ENCODE measurements at regions of chr1 and their contacts with region 1.

Region 1: DNA sequence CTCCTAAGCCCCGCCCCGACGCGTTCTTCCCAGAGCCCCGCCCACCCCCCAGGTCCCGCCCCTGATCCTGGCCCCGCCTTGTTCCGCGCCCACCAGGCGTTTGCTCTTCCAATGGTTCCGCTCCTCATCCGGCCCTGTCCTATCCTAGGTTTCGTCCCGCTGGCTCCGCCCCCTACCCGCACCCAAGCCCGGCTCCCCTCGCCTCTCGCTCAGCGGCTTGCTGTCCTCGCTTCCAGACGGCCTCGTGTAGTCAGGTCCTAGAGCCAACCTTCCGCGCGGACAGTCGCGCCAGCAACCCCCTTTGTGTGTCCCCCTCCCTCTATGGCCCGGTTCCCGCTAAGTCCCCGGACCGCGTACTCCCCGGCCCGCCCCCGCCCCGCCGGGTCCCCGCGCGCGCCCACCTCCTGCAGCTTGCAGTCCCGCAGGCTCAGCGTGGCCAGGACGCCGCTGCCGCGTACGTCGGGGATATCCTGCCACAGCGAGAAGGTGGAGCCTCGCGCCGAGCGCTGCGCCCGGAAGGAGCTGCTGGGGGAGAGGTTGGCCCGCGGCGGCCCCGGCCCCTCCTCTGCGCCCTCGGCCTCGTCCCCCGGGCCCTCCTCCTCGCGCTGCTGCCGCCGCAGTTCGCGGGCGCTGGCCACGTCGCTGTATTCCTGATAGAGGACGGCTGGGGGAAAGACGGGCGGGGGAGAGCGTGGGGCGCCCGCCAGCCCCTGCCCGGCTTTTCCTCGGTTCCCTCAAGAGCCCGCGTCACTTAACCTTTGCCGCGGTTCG is 5.7 kb downstream of the ARHGEF19 start:
- DNase-seq: peak; percentile 93
- H3K4me3 Mint-ChIP-seq: peak overlapping the region; percentile 83
- H3K27ac Mint-ChIP-seq: peak overlapping the region; percentile 93
- H3K4me1 Mint-ChIP-seq: peaks cover 3% of the 10 kb centered on the region
- H3K27me3 Mint-ChIP-seq: no peaks in the 10 kb centered on the region

Region 2: GRCh38 chr1:15957228-15958095 is 249.3 kb before region 1 on chr1:
- intact Hi-C with region 1: no loop called
- DNase-seq: no peak
- H3K4me3 Mint-ChIP-seq: no peak overlapping the region
- H3K27ac Mint-ChIP-seq: peak overlapping the region; percentile 64
- H3K4me1 Mint-ChIP-seq: peaks cover 62% of the 10 kb centered on the region
- H3K27me3 Mint-ChIP-seq: no peaks in the 10 kb centered on the region

Region 3: DNA sequence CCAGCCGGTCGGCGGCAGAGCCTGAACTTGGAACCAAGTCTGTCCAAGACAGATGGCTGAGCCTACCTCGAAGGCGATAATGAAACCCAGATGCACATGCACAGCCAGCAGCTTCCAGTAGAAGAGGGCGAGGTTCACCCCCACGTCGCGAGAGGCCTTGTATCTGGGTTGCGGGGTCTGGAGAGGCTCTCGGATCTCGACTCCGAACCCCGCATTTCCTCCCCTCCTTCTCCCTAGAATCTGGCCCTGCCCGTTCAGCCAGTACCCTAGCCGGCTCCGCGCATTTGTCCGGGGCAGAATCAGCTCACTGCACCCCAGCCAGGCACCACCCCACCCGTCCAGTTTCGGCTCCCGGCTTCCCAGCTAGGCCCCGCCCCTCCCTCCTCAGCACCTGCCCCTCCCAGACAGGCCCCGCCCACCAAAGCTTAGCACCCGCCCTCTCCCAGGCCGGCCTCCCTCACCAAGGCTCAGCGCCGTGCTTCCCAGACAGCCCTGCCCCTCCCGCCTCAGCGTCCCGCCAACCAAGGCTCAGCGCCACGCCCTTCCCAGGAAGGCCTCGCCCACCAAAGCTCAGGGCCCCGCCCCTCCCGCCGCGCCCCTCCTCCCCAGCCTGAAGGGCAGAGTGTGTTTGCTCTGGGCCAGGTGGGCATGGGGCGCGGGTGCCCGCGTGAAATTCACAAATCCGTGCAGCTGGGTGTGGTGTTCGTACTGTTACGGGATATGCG is 10.5 kb after region 1 on chr1:
- intact Hi-C with region 1: loop called (anchors 1 kb)
- DNase-seq: peak; percentile 92
- H3K4me3 Mint-ChIP-seq: peak overlapping the region; percentile 80
- H3K27ac Mint-ChIP-seq: no peak overlapping the region
- H3K4me1 Mint-ChIP-seq: peaks cover 14% of the 10 kb centered on the region
- H3K27me3 Mint-ChIP-seq: peaks cover 8% of the 10 kb centered on the region

Region 4: DNA sequence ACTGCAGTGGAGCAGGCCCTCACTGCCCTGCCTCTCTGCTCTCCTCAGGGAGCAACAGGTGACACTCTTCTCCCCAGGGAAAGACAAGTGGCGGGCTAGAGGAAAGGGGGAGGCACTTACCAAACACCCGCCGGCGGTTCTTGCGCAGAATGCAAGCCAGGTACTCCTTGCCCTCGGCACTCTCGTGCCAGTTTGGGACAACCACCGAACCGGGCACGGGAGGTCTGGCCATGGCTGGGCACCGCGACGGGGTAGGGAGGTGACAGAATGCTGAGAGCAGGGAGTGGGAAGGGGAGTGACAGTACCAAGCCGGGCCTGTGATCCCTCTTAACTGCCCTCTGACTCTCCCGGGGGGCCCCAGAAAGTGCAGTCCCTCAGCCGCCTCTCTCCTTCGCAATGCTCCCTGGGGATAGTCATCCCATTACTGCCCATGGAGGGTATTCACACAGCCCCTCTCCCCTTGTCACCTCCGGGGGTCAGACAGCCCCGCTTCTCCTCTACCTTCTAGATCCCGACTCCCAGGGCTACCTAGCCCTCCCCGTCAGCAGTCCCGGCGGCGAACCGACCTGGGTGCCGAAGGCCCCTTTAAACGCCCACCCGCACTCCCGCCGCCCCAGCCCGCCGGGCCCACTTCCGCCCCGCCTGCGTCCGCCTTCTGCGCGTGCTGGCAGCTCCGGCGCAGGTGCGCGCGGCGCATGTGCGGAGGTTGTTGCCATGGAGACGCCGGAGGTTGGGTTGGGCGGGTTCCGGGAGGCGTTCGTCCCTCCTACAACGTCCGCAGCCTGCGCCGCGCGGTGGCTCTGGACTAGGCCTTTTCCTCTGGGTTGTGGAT is 30.0 kb after region 1 on chr1 and contains the start of gene CPLANE2:
- intact Hi-C with region 1: loop called (anchors 1 kb)
- DNase-seq: peak; percentile 95
- H3K4me3 Mint-ChIP-seq: peak within 1 kb of the TSS; percentile 86
- H3K27ac Mint-ChIP-seq: peak within 1 kb of the TSS; percentile 80
- H3K4me1 Mint-ChIP-seq: peaks cover 18% of the 10 kb centered on the region
- H3K27me3 Mint-ChIP-seq: no peaks in the 10 kb centered on the region
- total RNA-seq, gene CPLANE2: 3.2 and 3.9 TPM in 2 replicates

Region 5: GRCh38 chr1:16246961-16247360 is 40.2 kb after region 1 on chr1:
- intact Hi-C with region 1: no loop called
- DNase-seq: no peak
- H3K4me3 Mint-ChIP-seq: no peak overlapping the region
- H3K27ac Mint-ChIP-seq: no peak overlapping the region
- H3K4me1 Mint-ChIP-seq: peaks cover 9% of the 10 kb centered on the region
- H3K27me3 Mint-ChIP-seq: no peaks in the 10 kb centered on the region

Region 6: DNA sequence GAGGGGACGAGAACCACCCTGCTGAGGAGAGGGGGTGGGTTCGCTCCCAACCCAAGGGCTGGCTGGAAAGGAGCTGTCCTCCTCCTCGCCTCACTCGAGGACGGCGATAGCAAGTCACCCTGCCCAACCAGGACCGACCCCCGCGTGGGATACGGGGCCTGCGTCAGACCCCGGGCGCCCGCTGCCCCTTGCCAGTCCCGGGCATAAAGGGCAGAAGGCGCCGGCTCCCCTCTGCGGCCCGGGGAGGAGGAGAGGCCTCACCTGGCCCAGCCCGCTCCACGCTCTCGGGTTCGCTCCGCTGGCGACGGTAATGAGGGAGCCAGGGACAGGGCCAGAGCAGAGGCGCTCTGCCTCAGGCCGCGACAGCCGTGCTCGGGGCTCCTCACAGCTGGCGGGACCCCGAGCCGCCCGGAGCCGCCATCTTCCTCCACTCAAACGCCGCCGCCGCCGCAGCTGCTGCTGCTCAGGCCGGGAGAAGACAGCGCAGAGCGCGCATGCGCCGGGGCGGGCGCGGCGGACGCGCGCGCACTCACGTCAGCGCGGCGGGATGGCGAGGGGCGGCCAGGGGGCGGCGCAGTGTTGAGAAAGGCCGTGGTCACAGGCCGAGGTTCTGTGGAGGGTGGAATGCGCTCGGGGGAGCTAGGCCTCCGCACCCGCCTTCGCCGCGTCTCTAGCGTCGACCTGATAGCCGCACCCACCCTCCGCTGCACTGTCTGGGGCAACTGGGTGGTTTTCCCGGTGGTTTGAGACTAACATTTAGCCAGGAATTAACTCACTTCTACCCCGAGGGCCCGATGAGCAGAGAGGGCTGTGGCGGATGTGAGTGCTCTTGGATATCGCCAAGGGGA is 145.5 kb after region 1 on chr1 and contains the start of gene FBXO42:
- intact Hi-C with region 1: loop called (anchors 2 kb)
- DNase-seq: peak; percentile 92
- H3K4me3 Mint-ChIP-seq: peak within 1 kb of the TSS; percentile 96
- H3K27ac Mint-ChIP-seq: peak within 1 kb of the TSS; percentile 93
- H3K4me1 Mint-ChIP-seq: peaks cover 26% of the 10 kb centered on the region
- H3K27me3 Mint-ChIP-seq: no peaks in the 10 kb centered on the region
- total RNA-seq, gene FBXO42: 17.9 and 18.5 TPM in 2 replicates

Measured in activated T-helper 2 cell treated with anti-CD3 and anti-CD28 coated beads, Interferon-gamma antibody, Interleukin-2, Interleukin-4, amounts not matched to agents 10 μg/mL and 5 μg/mL and 100 μg/mL, durations not matched to agents 14 hours and 24 hours and 36 hours (primary cell).